SK-N-SH (cell line): ENCODE measurements at regions of chr3 and their contacts with region 1.

Region 1: GRCh38 chr3:112979240-112979832 is 4.4 kb upstream of the CD200R1 start:
- DNase-seq: peak; percentile 16
- H3K4me3 ChIP-seq: no peak overlapping the region; a peak in 1 of 4 replicates
- H3K27ac ChIP-seq: no peak overlapping the region
- H3K4me1 ChIP-seq: no peaks in the 10 kb centered on the region; a peak in 1 of 4 replicates
- H3K27me3 ChIP-seq: no peaks in the 10 kb centered on the region
- CTCF ChIP-seq: peak; percentile 84
- EP300 ChIP-seq: no peak
- RAD21 ChIP-seq: peak; percentile 77

Region 2: DNA sequence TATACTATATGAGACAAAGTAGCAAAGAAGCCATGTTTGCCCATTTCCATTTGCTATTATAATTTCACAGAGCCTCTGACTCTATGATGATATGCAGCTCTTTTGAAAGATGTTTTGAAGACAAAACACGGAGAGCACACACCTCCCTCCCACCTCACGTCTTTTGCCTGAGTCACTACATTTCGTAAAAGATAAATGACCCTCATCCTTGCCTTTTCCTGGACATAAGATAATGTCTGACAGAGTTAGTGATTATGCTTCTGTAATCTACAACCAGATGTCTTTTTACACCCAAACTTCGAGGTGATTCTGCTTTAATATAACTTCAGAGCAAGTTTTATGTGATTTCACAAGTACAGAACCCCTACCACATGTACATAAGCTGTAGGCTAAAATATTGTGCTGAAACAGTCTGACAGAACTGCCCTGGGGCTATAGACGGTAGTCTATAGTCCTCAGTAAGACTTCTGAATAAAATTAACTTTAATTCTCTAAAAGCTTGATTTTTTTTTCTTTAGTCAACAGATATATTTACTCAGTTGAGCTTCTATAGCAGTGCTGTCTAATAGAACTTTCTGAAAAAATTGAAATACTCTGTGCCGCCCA is 232.6 kb before region 1 on chr3:
- CTCF ChIA-PET with region 1: interaction called, 14 read pairs
- POLR2A ChIA-PET with region 1: no interaction called
- DNase-seq: no peak
- H3K4me3 ChIP-seq: no peak overlapping the region
- H3K27ac ChIP-seq: peak overlapping the region; percentile 19 to 36
- H3K4me1 ChIP-seq: peaks cover 0 to 3% of the 10 kb centered on the region in 2 experiments; a peak in 2 of 4 replicates
- H3K27me3 ChIP-seq: no peaks in the 10 kb centered on the region
- CTCF ChIP-seq: no peak
- EP300 ChIP-seq: no peak
- RAD21 ChIP-seq: no peak

Region 3: DNA sequence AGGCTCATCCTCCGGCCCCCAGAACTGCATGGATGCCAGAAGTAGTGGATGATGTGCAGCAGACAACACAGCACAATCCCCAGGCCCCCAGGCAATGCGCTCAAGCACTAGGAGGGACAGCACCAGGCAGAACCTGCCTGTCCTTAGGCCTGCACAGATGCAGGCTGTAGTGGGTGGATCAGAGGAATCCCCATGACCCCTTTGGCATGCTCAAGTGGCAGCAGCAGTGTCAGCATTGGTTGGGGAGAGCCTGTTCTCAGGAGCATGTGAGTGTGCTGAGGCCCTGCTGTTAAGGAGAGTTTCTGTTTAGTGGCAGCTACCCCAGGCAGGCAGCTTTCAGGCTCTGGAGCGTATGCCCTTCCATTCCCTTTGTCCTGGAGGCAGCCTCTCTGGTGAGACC is 107.6 kb before region 1 on chr3:
- CTCF ChIA-PET with region 1: no interaction called
- POLR2A ChIA-PET with region 1: no interaction called
- DNase-seq: no peak
- H3K4me3 ChIP-seq: no peak overlapping the region
- H3K27ac ChIP-seq: no peak overlapping the region
- H3K4me1 ChIP-seq: no peaks in the 10 kb centered on the region
- H3K27me3 ChIP-seq: no peaks in the 10 kb centered on the region
- CTCF ChIP-seq: no peak
- EP300 ChIP-seq: no peak
- RAD21 ChIP-seq: no peak

Region 4: DNA sequence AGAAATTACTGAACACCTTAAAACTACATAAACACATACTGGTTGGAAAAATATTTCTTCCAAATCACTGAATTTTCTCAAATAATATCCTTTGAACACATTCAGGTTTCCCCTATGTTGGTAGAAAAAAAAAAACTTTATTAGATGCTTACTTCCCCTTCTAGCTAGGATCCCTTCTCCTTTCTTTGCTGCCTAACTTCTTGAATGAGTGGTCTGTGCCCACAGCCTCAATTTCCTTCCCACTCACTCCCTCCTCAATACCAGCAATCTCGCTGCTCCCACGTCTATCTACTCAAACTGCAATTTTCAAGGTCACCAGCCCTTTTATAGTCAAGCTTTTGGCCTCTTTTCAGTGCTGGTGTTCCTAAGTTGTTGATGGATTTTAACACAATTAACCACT is 12.7 kb before region 1 on chr3:
- CTCF ChIA-PET with region 1: interaction called, 28 read pairs
- POLR2A ChIA-PET with region 1: no interaction called
- DNase-seq: no peak
- H3K4me3 ChIP-seq: no peak overlapping the region
- H3K27ac ChIP-seq: no peak overlapping the region
- H3K4me1 ChIP-seq: no peaks in the 10 kb centered on the region
- H3K27me3 ChIP-seq: no peaks in the 10 kb centered on the region; the same call in 1 of the 2 replicates
- CTCF ChIP-seq: no peak
- EP300 ChIP-seq: no peak
- RAD21 ChIP-seq: no peak

Region 5: GRCh38 chr3:112990672-112991602 is 11.6 kb after region 1 on chr3 and contains the start of gene GTPBP8:
- CTCF ChIA-PET with region 1: interaction called, 21 read pairs
- POLR2A ChIA-PET with region 1: interaction called, 3 read pairs
- DNase-seq: peak; percentile 87
- H3K4me3 ChIP-seq: peak within 1 kb of the TSS; percentile 82 to 88
- H3K27ac ChIP-seq: peak within 1 kb of the TSS; percentile 88 to 99
- H3K4me1 ChIP-seq: peaks cover 9 to 12% of the 10 kb centered on the region in 2 experiments; a peak in 3 of 4 replicates
- H3K27me3 ChIP-seq: no peaks in the 10 kb centered on the region
- CTCF ChIP-seq: peak; percentile 25; the same call in 1 of the 2 replicates
- EP300 ChIP-seq: no peak
- RAD21 ChIP-seq: 0 out of 2 replicates have a peak, but pooled peaks have one; percentile 15
- polyA plus RNA-seq, gene GTPBP8: 19.2 and 20.1 TPM in 2 replicates